Psoas muscle (tissue), 8 donors: ENCODE measurements at regions of chr15 and their contacts with region 1.

Region 1: DNA sequence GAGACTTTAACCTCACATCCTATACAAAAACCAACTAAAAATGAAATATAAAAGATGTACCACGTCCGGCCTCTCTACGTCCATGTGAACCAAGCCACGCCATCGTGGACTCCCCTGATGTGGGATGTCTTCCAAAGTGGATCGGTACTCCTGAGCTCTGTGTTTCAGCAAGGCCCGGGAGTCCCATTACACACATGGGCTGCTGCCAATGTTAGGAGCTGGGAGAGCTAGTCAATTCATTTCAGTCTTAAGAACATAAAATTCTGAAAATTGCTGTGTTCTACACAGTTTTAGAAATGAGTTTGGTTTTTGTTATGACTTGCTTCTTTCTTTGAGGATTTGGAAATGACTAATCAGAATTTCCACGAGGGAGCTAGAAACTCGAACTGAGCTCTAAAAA is 131.0 kb downstream of the GABRG3 start:
- DNase-seq: no peak
- ATAC-seq: no peak
- H3K4me3 ChIP-seq: no peak overlapping the region
- H3K27ac ChIP-seq: no peak overlapping the region
- H3K4me1 ChIP-seq: no peaks in the 10 kb centered on the region
- H3K27me3 ChIP-seq: no peaks in the 10 kb centered on the region
- CTCF ChIP-seq: no peak

Region 2: GRCh38 chr15:26201177-26201858 is 900.7 kb before region 1 on chr15:
- intact Hi-C with region 1: loop called in 1 of 2 experiments (anchors 5 kb)
- DNase-seq: no peak
- ATAC-seq: no peak
- H3K4me3 ChIP-seq: no peak overlapping the region
- H3K27ac ChIP-seq: no peak overlapping the region
- H3K4me1 ChIP-seq: no peaks in the 10 kb centered on the region
- H3K27me3 ChIP-seq: peaks cover 0 to 3% (median 0%) of the 10 kb centered on the region in 3 donors
- CTCF ChIP-seq: no peak